ENCODE measurements at regions of chr1 and their contacts with region 1.

Region 1: GRCh38 chr1:31669786-31670592 is 25.3 kb upstream of the PEF1 start:
- DNase-seq: peak; percentile 83 to 87
- H3K4me3 ChIP-seq: peak overlapping the region in 2 of 3 donors; percentile 37 to 55
- H3K27ac ChIP-seq: peak overlapping the region; percentile 86 to 88
- H3K4me1 ChIP-seq: peaks cover 7 to 25% of the 10 kb centered on the region in 2 donors
- H3K27me3 ChIP-seq: no peaks in the 10 kb centered on the region
- CTCF ChIP-seq: peak in 2 of 3 donors; percentile 26 to 37
- POLR2A ChIP-seq: no peak

Region 2: DNA sequence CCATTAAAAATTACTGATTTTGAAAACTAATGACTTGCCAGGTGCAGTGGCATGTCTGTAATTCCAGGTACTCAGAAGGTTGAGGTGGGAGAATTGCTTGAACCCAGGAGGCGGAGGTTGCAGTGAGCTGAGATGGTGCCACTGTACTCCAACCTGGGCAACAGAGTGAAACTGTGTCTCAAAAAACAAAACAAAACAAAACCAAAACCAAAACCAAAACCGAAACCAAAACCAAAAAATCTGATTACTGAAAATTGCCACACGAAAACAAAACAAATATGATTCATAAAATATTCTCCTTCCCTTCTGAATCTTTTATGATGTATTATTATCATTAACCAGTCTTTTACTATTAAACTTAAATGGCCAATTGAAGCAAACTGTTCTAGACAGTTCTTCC is 182.8 kb before region 1 on chr1:
- intact Hi-C with region 1: no loop called
- DNase-seq: no peak
- H3K4me3 ChIP-seq: no peak overlapping the region
- H3K27ac ChIP-seq: no peak overlapping the region
- H3K4me1 ChIP-seq: no peaks in the 10 kb centered on the region
- H3K27me3 ChIP-seq: no peaks in the 10 kb centered on the region
- CTCF ChIP-seq: no peak
- POLR2A ChIP-seq: no peak

Region 3: GRCh38 chr1:31705080-31705866 is 35.3 kb after region 1 on chr1:
- intact Hi-C with region 1: loop called (anchors 5 kb)
- DNase-seq: peak in 1 of 2 donors; percentile 32
- H3K4me3 ChIP-seq: peak overlapping the region; percentile 6 to 67 (median 49)
- H3K27ac ChIP-seq: peak overlapping the region; percentile 93 to 95
- H3K4me1 ChIP-seq: peaks cover 22 to 31% of the 10 kb centered on the region in 2 donors
- H3K27me3 ChIP-seq: no peaks in the 10 kb centered on the region
- CTCF ChIP-seq: no peak
- POLR2A ChIP-seq: no peak

Region 4: DNA sequence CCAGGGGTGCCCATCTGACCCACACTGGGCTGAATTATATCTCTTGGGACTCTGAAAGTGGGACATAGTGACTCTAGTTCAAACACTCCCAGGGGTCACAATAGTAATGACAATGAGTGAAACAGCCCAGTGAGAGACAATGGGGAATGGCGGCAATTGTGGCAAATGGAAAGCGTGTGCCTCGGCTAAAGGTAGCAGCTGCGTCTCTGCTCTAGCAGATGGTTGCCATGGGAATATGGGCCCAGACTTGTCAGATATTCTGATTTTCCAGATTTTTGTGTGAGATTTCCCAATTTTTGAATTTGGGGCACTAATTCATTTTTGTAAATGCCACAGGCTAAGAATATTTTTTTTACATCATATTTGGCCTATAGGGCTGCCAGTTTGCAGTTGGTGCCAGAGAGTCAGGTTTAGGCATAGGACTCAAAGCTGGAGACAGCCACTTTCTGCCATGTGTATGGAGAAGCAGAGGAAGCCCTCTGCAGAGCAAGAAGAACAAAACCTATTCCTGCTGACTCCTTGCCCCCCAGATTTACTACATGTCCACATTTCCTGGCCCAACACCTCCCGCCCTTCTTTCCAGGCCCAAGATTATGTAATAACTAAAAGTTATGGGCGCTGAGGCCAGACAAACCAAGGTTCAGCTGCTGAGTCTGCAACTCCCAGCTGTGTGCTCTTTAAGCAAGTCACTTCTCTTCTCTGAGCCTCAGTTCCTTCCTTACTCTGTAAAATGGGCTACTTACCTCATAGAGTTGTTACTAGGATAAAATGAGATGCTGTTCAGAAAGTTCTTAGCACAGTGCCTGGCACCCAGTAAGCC is 289.7 kb after region 1 on chr1:
- intact Hi-C with region 1: loop called (anchors 10 kb)
- DNase-seq: no peak
- H3K4me3 ChIP-seq: no peak overlapping the region
- H3K27ac ChIP-seq: no peak overlapping the region
- H3K4me1 ChIP-seq: peaks cover 9 to 17% of the 10 kb centered on the region in 2 donors
- H3K27me3 ChIP-seq: no peaks in the 10 kb centered on the region
- CTCF ChIP-seq: no peak
- POLR2A ChIP-seq: no peak

Region 5: GRCh38 chr1:32801096-32801715 is 1131.2 kb after region 1 on chr1:
- intact Hi-C with region 1: no loop called
- DNase-seq: no peak
- H3K4me3 ChIP-seq: no peak overlapping the region
- H3K27ac ChIP-seq: no peak overlapping the region
- H3K4me1 ChIP-seq: no peaks in the 10 kb centered on the region
- H3K27me3 ChIP-seq: no peaks in the 10 kb centered on the region
- CTCF ChIP-seq: no peak
- POLR2A ChIP-seq: no peak